Posterior cingulate gyrus (tissue), 11 donors: ENCODE measurements at regions of chr3 and their contacts with region 1.

Region 1: GRCh38 chr3:46488735-46489361 is 8.9 kb upstream of the RTP3 start:
- DNase-seq: peak; percentile 65 to 98 (median 91)

Region 2: DNA sequence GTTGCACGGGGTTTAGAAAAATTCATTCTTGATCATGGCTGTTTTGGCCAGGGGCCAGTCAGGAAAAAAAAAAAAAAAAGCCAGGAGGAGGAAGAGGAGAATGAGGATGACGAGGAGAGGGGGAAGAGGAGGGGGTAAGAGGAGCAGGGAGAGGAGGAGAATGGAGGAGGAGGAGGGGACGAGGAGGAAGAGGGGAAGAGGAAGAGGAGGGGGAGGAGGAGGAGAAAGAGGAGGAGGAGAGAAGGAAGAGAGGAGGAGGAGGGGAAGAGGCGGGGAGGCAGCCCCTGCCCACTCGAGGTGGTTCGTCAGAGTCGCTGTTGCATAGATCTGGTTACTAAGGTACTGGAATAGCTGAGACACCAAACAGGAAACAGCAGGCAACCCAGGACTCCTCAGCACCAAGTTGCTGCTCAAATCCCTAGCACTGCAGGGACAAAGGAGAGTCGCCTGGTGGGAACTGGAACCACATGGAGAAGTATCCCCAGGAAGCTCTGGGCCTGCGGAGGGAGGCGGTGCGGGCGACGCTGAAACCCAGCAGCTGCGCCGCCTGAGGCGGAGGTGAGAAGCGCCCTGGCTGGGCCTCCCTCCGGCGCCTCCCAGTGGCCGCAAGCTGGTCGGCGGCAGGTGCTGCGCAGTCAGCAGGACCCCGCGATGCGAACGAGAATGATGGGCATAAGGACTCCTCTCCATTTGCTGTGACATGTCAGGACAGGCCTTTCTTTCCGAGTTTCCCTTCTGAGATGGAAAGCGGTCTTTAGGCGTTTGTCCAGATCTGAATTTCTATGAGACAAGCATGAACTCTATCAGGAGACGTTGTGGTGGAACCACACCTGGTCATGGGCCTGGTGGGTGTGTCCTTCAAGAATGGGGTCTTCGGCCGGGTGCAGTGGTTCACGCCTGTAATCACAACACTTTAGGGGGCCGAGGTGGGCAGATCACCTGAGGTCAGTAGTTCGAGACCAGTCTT is 141.0 kb after region 1 on chr3:
- intact Hi-C with region 1: loop called (anchors 2 kb)
- DNase-seq: peak; percentile 63 to 96 (median 76)

Region 3: DNA sequence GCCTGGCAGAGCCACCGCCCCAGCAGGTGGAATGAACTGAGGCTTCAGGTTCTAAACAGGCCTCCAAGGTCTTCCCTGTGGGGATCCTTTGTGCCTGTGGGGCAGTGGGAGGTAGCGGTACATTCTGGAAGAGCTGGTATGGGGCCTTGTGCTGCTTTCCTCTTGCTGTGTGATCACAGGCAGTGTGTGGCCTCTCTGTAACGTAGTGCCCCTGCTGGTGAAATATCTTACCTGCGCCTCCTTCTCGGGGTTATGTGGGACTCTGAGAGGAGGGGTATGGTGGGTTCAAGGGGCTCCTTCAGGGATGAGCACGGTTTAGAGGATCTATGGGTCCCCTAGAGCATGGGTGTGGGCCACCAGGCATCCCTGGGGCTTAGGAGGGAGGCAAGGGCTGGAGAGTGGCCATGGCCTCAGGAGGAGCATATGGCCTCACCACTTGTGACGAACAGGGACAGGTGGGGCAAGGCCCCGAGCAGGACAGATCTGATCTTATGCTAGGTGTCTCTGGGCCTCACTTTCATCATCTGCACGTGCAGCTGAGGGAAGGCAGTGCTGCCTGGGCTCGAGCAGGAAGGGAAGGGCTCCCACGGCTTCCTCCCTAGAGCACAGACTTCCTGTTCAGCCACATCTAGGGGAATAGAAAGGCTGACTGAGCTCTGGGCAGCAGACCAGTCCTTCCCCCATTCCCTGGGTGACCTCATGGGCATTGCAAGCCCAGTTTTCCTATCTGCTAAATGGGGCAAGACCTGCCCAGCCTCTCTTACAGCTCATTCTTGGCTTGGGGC is 206.5 kb after region 1 on chr3:
- intact Hi-C with region 1: loop called (anchors 10 kb)
- DNase-seq: no peak